Aorta (tissue), 5 donors: ENCODE measurements at regions of chr4 and their contacts with region 1.

Region 1: DNA sequence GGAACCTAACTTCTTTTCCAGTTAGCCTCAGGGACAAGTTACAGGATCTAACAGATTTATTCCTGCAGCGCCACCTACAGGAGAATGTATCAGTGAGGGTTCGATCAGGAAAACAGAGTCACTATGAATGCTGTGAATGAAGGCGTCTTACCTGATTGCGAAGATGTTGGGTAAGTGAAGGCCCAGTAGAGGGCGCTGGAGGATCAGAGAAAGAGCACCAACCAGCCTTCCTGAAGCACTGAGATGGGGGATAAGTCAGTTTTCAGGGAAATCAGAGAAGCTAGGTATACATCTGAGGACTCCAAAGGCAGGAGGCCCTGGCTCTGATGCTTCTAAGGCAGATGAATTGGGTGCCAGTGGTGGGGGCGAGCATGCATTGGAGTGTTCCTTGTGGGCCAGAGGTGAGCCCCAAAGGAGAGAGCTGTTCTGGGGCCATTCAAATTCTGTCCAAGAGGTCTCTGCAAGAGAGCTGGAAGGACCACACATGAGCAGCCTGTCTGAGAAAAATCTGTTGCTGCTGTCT is 169.9 kb upstream of the AADAT start:
- DNase-seq: peak in 1 of 2 donors; percentile 58
- ATAC-seq: peak; percentile 50
- H3K4me3 ChIP-seq: no peak overlapping the region
- H3K27ac ChIP-seq: no peak overlapping the region
- H3K4me1 ChIP-seq: no peaks in the 10 kb centered on the region
- H3K27me3 ChIP-seq: no peaks in the 10 kb centered on the region

Region 2: GRCh38 chr4:170138580-170139194 is 121.0 kb before region 1 on chr4:
- intact Hi-C with region 1: loop called in 1 of 2 experiments (anchors 2 kb)
- DNase-seq: peak; percentile 67 to 87
- ATAC-seq: peak; percentile 66
- H3K4me3 ChIP-seq: peak overlapping the region in 1 of 2 donors; percentile 26
- H3K27ac ChIP-seq: no peak overlapping the region
- H3K4me1 ChIP-seq: no peaks in the 10 kb centered on the region
- H3K27me3 ChIP-seq: peaks cover 0 to 2% of the 10 kb centered on the region in 2 donors

Region 3: GRCh38 chr4:171650543-171650942 is 1390.9 kb after region 1 on chr4:
- intact Hi-C with region 1: loop called in 1 of 2 experiments (anchors 5 kb)
- DNase-seq: no peak
- ATAC-seq: no peak
- H3K4me3 ChIP-seq: no peak overlapping the region
- H3K27ac ChIP-seq: no peak overlapping the region
- H3K4me1 ChIP-seq: no peaks in the 10 kb centered on the region
- H3K27me3 ChIP-seq: no peaks in the 10 kb centered on the region